Activated CD4-positive, alpha-beta memory T cell treated with anti-CD3 and anti-CD28 coated beads for 36 hours (primary cell): ENCODE measurements at regions of chr3 and their contacts with region 1.

Region 1: DNA sequence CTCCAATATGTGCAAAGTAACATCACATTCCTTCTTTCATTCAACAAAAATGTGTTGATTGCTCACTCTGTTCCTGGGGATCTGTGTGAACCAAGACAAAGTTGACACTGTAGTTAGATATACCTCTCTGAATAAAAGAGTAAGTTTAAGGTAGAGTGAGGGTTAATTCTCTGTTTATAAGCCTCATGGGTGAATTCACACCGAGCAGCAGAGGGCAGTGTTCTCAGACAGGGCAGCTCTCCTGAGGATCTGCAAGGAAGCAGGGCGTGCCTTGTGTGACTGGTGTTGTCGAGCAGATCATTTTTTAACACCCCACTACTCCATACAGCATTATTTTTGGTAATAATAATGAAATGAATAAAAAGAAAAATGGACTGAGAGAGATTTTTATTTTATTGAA is 34.4 kb downstream of the PAQR9 start:
- DNase-seq: peak; percentile 60
- H3K4me3 Mint-ChIP-seq: no peak overlapping the region
- H3K27ac Mint-ChIP-seq: no peak overlapping the region
- H3K4me1 Mint-ChIP-seq: no peaks in the 10 kb centered on the region
- H3K27me3 Mint-ChIP-seq: peaks cover 30% of the 10 kb centered on the region

Region 2: GRCh38 chr3:142987080-142987700 is 58.1 kb after region 1 on chr3:
- CTCF ChIA-PET with region 1: interaction called, 13 read pairs
- POLR2A ChIA-PET with region 1: no interaction called
- intact Hi-C with region 1: loop called (anchors 1 kb)
- DNase-seq: no peak
- H3K4me3 Mint-ChIP-seq: no peak overlapping the region
- H3K27ac Mint-ChIP-seq: no peak overlapping the region
- H3K4me1 Mint-ChIP-seq: no peaks in the 10 kb centered on the region
- H3K27me3 Mint-ChIP-seq: peaks cover 10% of the 10 kb centered on the region